ENCODE measurements at regions of chr4 and their contacts with region 1.

Region 1: GRCh38 chr4:79923281-79923680 is 149.7 kb downstream of the ANTXR2 start:
- DNase-seq: no peak
- H3K4me3 Mint-ChIP-seq: no peak overlapping the region
- H3K27ac Mint-ChIP-seq: no peak overlapping the region
- H3K4me1 Mint-ChIP-seq: peaks cover 11% of the 10 kb centered on the region
- H3K27me3 Mint-ChIP-seq: no peaks in the 10 kb centered on the region

Region 2: DNA sequence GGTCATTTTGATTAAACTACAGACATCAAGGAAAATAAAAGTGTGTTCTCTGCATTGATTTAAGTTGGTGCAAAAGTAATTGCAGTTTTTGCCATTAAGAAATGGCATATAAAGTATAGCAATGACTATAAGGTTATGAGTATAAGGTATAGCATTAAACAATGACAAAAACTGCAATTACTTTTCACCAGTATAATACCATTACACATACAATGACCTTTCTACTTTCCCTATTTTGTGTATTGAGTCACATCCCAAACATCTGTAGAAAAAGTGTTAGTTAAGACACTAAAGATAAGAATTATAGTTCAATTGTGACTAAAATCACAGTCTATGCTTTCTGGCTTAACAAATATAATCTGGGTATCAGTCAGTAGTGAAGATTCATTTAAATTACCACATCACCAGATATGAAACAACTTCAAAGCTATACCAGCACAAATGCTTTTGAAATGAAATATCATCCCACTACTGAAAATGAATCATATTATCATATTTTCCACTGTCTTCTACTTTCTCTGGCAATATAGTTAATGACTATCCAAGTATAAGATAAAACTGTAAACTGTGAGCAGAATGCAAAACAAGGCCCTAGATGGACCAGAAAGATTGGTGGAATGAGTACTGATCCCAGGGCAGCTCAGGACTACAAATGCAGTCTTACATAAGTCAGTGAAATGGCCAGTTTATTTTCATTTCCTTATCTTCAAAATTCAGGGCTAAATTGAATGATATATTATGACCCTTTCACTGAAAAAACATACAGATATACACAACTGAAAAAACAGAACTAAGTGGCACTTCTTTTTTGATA is 91.4 kb before region 1 on chr4:
- intact Hi-C with region 1: no loop called
- DNase-seq: no peak
- H3K4me3 Mint-ChIP-seq: no peak overlapping the region
- H3K27ac Mint-ChIP-seq: no peak overlapping the region
- H3K4me1 Mint-ChIP-seq: no peaks in the 10 kb centered on the region
- H3K27me3 Mint-ChIP-seq: peaks cover 2% of the 10 kb centered on the region

Region 3: DNA sequence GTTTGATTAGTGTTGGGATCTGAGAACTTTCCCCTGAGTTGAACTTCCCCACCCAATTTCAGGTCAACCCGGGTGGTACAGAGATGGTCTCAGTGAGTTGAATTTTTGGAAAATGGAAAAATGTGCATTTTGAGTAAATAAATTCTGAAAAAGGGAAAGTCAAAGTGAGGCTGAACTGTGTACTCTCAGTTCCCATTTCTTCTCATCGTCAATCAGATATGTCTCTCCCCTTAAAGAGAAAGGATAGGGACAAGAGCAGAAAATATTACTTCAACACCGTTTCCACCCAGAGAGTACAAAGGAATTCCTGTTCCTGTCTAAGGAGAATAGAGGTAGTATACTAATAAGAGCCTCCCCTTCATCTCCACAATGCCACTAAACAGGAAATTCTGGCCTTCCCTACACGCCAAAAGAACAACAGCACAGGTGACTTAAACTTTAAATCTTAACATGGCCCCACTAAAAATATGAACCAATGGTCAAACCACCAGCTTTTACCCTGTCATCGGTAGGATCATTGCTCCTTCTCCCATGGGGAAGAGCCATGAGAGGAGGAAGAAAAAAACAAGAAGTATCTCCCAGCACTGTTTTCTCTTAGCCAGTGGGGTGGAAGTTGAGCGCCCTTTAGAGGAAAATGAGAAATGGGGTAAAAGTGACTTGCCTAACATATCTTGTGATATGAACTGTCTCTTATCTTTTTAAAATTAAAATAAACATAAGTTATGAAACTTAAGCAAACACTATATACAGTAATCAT is 1137.5 kb after region 1 on chr4:
- intact Hi-C with region 1: loop called (anchors 5 kb)
- DNase-seq: no peak
- H3K4me3 Mint-ChIP-seq: no peak overlapping the region
- H3K27ac Mint-ChIP-seq: no peak overlapping the region
- H3K4me1 Mint-ChIP-seq: no peaks in the 10 kb centered on the region
- H3K27me3 Mint-ChIP-seq: peaks cover 5% of the 10 kb centered on the region

Region 4: GRCh38 chr4:81631958-81632441 is 1708.7 kb after region 1 on chr4:
- intact Hi-C with region 1: no loop called
- DNase-seq: no peak
- H3K4me3 Mint-ChIP-seq: no peak overlapping the region
- H3K27ac Mint-ChIP-seq: no peak overlapping the region
- H3K4me1 Mint-ChIP-seq: peaks cover 14% of the 10 kb centered on the region
- H3K27me3 Mint-ChIP-seq: no peaks in the 10 kb centered on the region

Measured in activated T-helper 1 cell treated with anti-CD3 and anti-CD28 coated beads, Interleukin-12 subunit alpha, Interleukin-12 subunit beta, Interleukin-2, Interleukin-4 antibody, amounts not matched to agents 30 ng/mL and 10 ng/mL and 1 ng/mL, durations not matched to agents 14 hours and 24 hours and 36 hours (primary cell).